ENCODE measurements at regions of chr5 and their contacts with region 1.

Region 1: DNA sequence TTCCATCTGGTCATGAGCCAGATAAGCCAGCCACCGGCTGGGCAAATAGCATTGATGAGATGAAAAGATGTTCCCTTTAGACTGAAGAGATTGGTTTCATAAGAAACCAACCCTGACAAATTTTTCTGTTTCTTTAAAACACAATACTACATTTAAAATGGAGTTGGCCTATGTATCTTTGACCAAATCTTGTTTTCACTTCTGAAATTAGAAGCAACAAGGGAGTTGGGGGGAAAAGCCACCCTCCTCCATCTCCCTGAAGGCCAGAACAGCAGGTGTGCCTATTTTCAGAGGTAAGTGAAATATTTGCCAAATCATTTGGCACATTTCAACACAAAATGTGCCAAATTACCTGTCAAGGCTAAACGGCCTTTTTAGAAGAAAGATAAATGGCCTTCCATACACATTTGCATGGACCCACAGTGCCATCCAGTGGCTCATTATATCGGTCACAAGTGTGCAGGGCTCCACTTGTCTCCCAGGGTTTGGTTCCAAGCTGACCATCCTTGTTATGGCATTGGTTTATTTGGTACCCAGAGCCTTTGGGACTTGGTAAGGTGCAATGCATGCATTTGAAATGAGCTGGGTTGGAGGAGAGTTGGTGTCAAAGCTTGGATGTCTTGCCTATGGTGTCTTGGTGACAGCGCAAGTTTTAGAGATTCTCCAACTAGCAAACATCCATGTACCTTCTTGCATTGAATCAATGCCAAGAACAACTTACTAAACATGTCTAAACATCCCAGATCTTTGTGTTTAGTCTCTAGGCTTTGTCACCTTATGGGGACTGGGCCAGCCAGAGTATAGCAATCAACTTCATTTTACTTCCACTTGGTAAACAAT is 372.0 kb upstream of the KIF2A start:
- DNase-seq: peak in 1 of 2 donors; percentile 57
- ATAC-seq: peak; percentile 78

Region 2: DNA sequence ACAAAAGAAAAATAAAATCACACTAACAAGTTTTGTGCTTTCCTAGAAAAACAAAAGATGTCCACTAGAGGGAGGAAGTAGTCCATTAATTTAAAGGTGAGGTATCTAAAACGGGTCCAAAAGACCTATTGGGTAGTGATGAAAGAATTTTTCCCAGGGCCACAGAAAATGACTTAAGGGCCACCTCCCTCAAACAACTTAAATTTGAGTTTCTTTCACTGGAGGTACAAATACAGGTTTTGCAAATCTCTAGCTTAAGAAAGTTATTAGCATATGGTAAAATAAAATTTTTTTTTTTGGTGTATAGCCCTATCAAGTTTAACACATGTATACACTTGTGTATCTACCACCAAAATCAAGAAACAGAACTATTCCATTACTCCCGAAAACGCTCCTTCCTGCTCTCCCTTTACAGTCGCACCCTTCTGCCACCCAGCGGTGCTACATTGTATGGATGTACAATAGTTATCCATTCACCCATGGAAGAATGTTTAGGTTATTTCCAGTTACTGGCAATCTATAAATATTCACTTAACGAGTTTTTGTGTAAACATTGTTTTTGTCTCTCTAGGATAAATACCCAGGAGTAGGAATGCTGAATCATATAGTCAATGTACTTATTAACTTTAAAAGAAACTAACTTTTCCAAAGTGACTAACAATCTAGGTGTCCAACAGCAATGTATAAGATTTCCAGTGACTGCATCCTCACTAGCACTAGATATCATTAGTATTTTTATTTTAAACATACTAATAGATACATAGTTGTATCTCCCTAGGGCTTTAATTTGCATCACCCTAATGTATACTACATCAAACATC is 1256.0 kb before region 1 on chr5:
- intact Hi-C with region 1: loop called in 1 of 2 experiments (anchors 10 kb)
- DNase-seq: peak; percentile 85 to 87
- ATAC-seq: peak; percentile 74